ENCODE measurements at regions of chr2 and their contacts with region 1.

Region 1: DNA sequence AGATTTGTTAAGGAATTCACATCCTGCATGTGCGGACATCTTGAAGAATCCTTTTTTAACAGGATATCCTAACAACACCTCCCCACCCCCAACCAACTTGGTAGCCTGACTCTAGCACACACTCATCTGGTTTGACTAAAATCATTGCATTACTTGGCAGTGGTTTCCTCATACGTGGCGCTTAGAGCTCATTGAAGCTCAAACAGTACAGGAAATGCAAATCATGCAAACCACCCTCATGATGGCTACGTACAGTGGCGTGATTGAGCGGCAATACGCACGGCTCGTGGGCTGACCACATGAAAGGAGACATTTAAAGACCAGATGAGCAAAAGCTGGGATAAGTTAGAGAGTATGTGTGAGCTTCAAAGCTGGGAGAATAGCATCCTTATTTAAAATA is 336.2 kb downstream of the ZEB2 start:
- DNase-seq: peak; percentile 61
- ATAC-seq: peak; percentile 99
- H3K4me3 ChIP-seq: no peak overlapping the region
- H3K27ac ChIP-seq: no peak overlapping the region
- H3K4me1 ChIP-seq: peaks cover 4% of the 10 kb centered on the region; the same call in 1 of the 2 replicates
- H3K27me3 ChIP-seq: no peaks in the 10 kb centered on the region
- CTCF ChIP-seq: no peak
- EP300 ChIP-seq: peak; percentile 74 to 76; a peak in 3 of 4 replicates
- POLR2A ChIP-seq: no peak
- RAD21 ChIP-seq: no peak

Region 2: DNA sequence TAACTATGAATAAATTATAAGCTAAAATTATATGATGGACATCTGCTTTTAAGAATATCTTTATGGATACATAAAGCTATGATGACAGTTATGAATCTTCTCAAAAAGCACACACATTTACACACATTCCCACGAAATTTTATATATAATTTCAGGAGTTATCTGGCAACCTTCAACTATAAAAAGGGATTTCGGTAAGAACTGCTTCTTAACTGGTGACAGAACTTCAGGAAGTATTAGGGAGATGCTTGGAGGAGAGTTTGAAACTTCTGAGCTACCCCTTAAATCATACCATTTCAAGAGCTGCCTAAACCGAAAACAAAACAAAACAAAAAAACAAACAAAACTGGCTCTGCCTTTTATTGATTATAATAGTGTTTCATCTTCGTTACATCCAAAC is 63.2 kb before region 1 on chr2:
- CTCF ChIA-PET with region 1: no interaction called
- POLR2A ChIA-PET with region 1: no interaction called
- RAD21 ChIA-PET with region 1: no interaction called
- SMC1A ChIA-PET with region 1: no interaction called
- in situ Hi-C with region 1: no loop called
- intact Hi-C with region 1: no loop called
- DNase-seq: no peak
- ATAC-seq: no peak
- H3K4me3 ChIP-seq: no peak overlapping the region
- H3K27ac ChIP-seq: no peak overlapping the region
- H3K4me1 ChIP-seq: no peaks in the 10 kb centered on the region
- H3K27me3 ChIP-seq: no peaks in the 10 kb centered on the region
- CTCF ChIP-seq: no peak
- EP300 ChIP-seq: no peak
- POLR2A ChIP-seq: no peak
- RAD21 ChIP-seq: no peak

Region 3: DNA sequence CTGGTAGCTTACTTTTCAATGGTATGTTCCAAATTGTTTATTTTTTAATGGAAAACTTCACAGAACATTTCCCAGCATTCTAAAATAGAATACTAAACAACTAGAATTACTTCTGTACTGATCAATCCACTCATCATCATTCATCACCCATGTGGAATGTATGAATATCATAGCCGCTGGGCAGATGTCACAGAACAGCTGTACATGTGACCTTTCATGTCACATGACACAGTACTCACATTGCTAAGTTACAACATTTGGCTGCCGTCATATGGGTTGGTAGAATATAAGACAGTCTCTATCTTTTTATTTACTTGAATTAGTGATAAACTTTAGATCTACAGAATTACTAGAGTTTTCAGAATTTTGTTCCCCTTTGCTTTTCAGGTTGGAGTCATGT is 51.4 kb before region 1 on chr2:
- CTCF ChIA-PET with region 1: no interaction called
- POLR2A ChIA-PET with region 1: no interaction called
- RAD21 ChIA-PET with region 1: no interaction called
- SMC1A ChIA-PET with region 1: no interaction called
- in situ Hi-C with region 1: no loop called
- intact Hi-C with region 1: no loop called
- DNase-seq: no peak
- ATAC-seq: no peak
- H3K4me3 ChIP-seq: no peak overlapping the region
- H3K27ac ChIP-seq: no peak overlapping the region
- H3K4me1 ChIP-seq: no peaks in the 10 kb centered on the region
- H3K27me3 ChIP-seq: no peaks in the 10 kb centered on the region
- CTCF ChIP-seq: no peak
- EP300 ChIP-seq: no peak
- POLR2A ChIP-seq: no peak
- RAD21 ChIP-seq: no peak

Region 4: DNA sequence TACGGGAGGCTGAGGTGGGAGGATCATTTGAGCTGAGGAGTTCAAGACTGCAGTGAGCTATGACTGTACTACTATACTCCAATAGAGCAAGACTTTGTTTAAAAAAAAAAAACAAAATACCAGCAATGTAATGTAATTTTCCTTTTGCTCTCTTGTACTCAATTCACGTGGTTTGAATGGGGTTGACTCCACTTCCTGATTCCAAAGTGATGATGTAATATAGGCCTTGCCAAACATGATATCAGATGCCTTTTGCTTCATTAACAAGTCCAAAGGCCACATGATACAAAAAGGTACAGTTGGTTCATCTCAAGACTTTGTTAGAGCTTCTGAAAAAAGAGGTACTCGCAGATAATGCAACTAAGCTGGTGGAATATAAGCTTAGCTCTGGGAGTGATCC is 14.4 kb after region 1 on chr2:
- CTCF ChIA-PET with region 1: interaction called, 5 read pairs
- POLR2A ChIA-PET with region 1: interaction called, 3 read pairs
- RAD21 ChIA-PET with region 1: interaction called, 4 read pairs
- SMC1A ChIA-PET with region 1: interaction called, 32 read pairs
- in situ Hi-C with region 1: no loop called
- intact Hi-C with region 1: no loop called
- DNase-seq: no peak
- ATAC-seq: no peak
- H3K4me3 ChIP-seq: no peak overlapping the region
- H3K27ac ChIP-seq: no peak overlapping the region
- H3K4me1 ChIP-seq: no peaks in the 10 kb centered on the region
- H3K27me3 ChIP-seq: no peaks in the 10 kb centered on the region
- CTCF ChIP-seq: no peak
- EP300 ChIP-seq: no peak
- POLR2A ChIP-seq: no peak
- RAD21 ChIP-seq: no peak

Region 5: GRCh38 chr2:144215701-144216675 is 32.3 kb after region 1 on chr2:
- CTCF ChIA-PET with region 1: interaction called, 3 read pairs
- POLR2A ChIA-PET with region 1: interaction called, 4 read pairs
- RAD21 ChIA-PET with region 1: interaction called, 6 read pairs
- SMC1A ChIA-PET with region 1: interaction called, 10 read pairs
- in situ Hi-C with region 1: no loop called
- intact Hi-C with region 1: no loop called
- DNase-seq: peak; percentile 20
- ATAC-seq: peak; percentile 72
- H3K4me3 ChIP-seq: no peak overlapping the region
- H3K27ac ChIP-seq: peak overlapping the region; percentile 16
- H3K4me1 ChIP-seq: peaks cover 28% of the 10 kb centered on the region
- H3K27me3 ChIP-seq: no peaks in the 10 kb centered on the region
- CTCF ChIP-seq: no peak
- EP300 ChIP-seq: 0 out of 4 replicates have a peak, but pooled peaks of 1 of the 2 experiments have one; percentile 9
- POLR2A ChIP-seq: no peak
- RAD21 ChIP-seq: 0 out of 2 replicates have a peak, but pooled peaks have one; percentile 12

Region 6: GRCh38 chr2:144233733-144234541 is 50.2 kb after region 1 on chr2:
- CTCF ChIA-PET with region 1: interaction called, 4 read pairs
- POLR2A ChIA-PET with region 1: no interaction called
- RAD21 ChIA-PET with region 1: interaction called, 8 read pairs
- SMC1A ChIA-PET with region 1: interaction called, 10 read pairs
- in situ Hi-C with region 1: no loop called
- intact Hi-C with region 1: no loop called
- DNase-seq: no peak
- ATAC-seq: peak; percentile 39; the same call in 2 of the 3 replicates
- H3K4me3 ChIP-seq: no peak overlapping the region
- H3K27ac ChIP-seq: no peak overlapping the region; the same call in 1 of the 2 replicates
- H3K4me1 ChIP-seq: peaks cover 27% of the 10 kb centered on the region
- H3K27me3 ChIP-seq: no peaks in the 10 kb centered on the region
- CTCF ChIP-seq: no peak
- EP300 ChIP-seq: no peak
- POLR2A ChIP-seq: no peak
- RAD21 ChIP-seq: no peak

Region 7: DNA sequence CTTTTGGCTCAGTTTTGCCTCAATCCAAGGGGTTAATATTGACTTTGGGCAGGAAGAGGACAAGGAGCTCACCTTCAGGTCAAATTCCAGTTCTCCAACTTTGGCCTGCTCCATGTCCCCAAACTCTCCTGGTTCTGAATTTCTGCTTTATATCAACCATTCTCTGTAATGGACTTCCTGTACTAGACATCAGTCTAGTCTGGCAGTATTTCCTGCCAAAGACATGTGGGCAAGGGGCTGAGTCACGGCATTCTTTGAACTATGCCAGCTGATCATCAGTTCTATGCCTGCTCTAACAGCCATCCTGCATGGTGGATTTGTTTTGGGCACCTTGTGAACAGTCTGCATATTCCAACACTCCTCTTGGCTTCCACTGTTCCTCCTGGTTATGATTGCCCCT is 136.8 kb after region 1 on chr2:
- CTCF ChIA-PET with region 1: interaction called, 4 read pairs
- POLR2A ChIA-PET with region 1: no interaction called
- RAD21 ChIA-PET with region 1: interaction called, 6 read pairs
- SMC1A ChIA-PET with region 1: interaction called, 8 read pairs
- in situ Hi-C with region 1: no loop called
- intact Hi-C with region 1: loop called (anchors 5 kb)
- DNase-seq: no peak
- ATAC-seq: no peak
- H3K4me3 ChIP-seq: no peak overlapping the region
- H3K27ac ChIP-seq: no peak overlapping the region
- H3K4me1 ChIP-seq: peaks cover 12% of the 10 kb centered on the region; the same call in 1 of the 2 replicates
- H3K27me3 ChIP-seq: no peaks in the 10 kb centered on the region
- CTCF ChIP-seq: no peak
- EP300 ChIP-seq: no peak
- POLR2A ChIP-seq: no peak
- RAD21 ChIP-seq: no peak

Region 8: DNA sequence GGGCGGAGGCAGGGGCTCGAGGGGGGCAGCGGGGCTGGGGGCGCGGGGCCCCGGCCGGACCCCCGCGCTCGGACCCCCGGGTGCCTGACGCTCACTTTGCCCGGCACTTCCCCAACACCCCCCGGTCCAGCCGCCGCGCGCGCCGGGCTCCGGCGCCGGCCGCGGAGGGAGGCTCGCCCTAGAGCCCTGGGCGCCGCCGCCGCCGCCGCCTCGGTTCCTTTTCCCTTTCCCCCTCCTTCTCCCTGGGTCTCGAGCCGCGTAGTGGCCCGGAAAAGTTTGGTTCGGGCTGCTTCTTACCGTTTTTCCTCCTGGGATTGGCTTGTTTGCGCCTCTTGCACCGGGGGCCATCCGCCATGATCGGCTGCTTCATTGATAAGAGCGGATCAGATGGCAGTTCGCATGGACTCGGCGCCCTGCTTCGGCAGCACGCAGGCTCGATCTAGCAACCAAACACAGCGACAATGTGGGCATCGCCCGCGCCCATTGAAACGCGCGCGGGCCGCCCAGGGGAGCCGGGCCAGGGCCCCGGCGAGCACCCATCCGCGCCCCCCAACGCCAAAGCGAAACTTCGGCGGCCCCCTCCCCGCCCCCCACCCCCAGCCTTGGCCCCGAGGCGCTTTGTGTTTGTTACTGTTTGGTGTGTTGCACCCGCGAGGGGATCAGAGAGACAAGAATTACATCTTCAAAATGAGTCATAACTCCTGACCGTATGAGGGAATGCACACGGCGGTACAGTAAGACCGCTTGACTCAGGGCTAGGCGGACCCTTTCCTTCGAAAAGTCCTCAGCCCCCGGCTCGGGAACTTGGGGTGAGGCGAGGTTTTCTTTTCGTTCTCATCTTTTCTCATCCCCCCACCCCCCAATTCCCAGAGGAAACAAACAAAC is 333.5 kb after region 1 on chr2:
- CTCF ChIA-PET with region 1: no interaction called
- POLR2A ChIA-PET with region 1: no interaction called
- RAD21 ChIA-PET with region 1: no interaction called
- SMC1A ChIA-PET with region 1: no interaction called
- in situ Hi-C with region 1: no loop called
- intact Hi-C with region 1: no loop called
- DNase-seq: no peak
- ATAC-seq: peak; percentile 85
- H3K4me3 ChIP-seq: peak overlapping the region; percentile 76
- H3K27ac ChIP-seq: no peak overlapping the region
- H3K4me1 ChIP-seq: peaks cover 18% of the 10 kb centered on the region; the same call in 1 of the 2 replicates
- H3K27me3 ChIP-seq: peaks cover 10 to 41% of the 10 kb centered on the region in 2 experiments
- CTCF ChIP-seq: no peak
- EP300 ChIP-seq: no peak
- POLR2A ChIP-seq: 0 out of 2 replicates have a peak, but pooled peaks have one; percentile 47
- RAD21 ChIP-seq: no peak